Activated T-helper 2 cell treated with anti-CD3 and anti-CD28 coated beads, Interferon-gamma antibody, Interleukin-2, Interleukin-4, amounts not matched to agents 10 μg/mL and 5 μg/mL and 100 μg/mL, durations not matched to agents 14 hours and 24 hours and 36 hours (primary cell): ENCODE measurements at regions of chr17 and their contacts with region 1.

Region 1: GRCh38 chr17:27473748-27474609 is 17.7 kb downstream of the KSR1 start:
- DNase-seq: peak; percentile 74
- H3K4me3 Mint-ChIP-seq: peak overlapping the region; percentile 10
- H3K27ac Mint-ChIP-seq: peak overlapping the region; percentile 89
- H3K4me1 Mint-ChIP-seq: peaks cover 80% of the 10 kb centered on the region
- H3K27me3 Mint-ChIP-seq: no peaks in the 10 kb centered on the region

Region 2: GRCh38 chr17:27293898-27294688 is 179.9 kb before region 1 on chr17 and contains the start of gene WSB1:
- intact Hi-C with region 1: loop called (anchors 5 kb)
- DNase-seq: peak; percentile 89
- H3K4me3 Mint-ChIP-seq: peak within 1 kb of the TSS; percentile 97
- H3K27ac Mint-ChIP-seq: peak within 1 kb of the TSS; percentile 99
- H3K4me1 Mint-ChIP-seq: peaks cover 29% of the 10 kb centered on the region
- H3K27me3 Mint-ChIP-seq: no peaks in the 10 kb centered on the region
- total RNA-seq, gene WSB1: 165 and 170 TPM in 2 replicates

Region 3: GRCh38 chr17:27332485-27333409 is 141.2 kb before region 1 on chr17:
- intact Hi-C with region 1: no loop called
- DNase-seq: peak; percentile 84
- H3K4me3 Mint-ChIP-seq: peak overlapping the region; percentile 85
- H3K27ac Mint-ChIP-seq: peak overlapping the region; percentile 99
- H3K4me1 Mint-ChIP-seq: peaks cover 23% of the 10 kb centered on the region
- H3K27me3 Mint-ChIP-seq: no peaks in the 10 kb centered on the region

Region 4: DNA sequence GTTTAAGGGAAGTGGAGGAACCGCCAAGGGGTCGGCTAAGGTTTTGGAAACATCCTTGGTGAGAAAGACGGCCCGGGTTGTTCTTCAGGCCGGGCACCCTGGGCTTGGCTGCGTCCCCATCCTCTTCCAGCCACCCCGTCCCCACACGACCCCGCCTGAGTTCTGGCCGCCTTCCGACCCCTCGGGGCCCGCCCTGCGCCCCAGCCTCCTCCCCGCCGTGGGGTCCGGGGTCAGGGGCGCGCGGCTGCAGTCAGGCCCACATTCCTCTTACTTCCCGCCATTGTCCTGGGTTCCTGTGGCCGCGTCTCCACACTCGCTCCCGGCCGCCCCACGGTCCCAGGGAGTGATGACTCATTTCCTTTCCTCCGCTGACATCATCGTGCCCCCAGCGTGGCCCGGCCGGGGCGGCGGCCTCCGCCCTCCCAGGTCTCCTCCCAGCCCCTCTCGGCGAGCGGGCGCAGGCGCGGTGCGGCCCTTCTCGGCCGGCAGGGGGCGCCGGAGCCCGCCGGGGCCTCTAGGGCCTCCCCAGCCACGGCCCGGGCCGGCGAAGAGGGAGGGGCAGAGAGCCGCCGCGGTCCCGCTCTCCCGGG is 120.4 kb before region 1 on chr17:
- intact Hi-C with region 1: loop called (anchors 5 kb)
- DNase-seq: peak; percentile 84
- H3K4me3 Mint-ChIP-seq: peak overlapping the region; percentile 78
- H3K27ac Mint-ChIP-seq: peak overlapping the region; percentile 96
- H3K4me1 Mint-ChIP-seq: peaks cover 26% of the 10 kb centered on the region
- H3K27me3 Mint-ChIP-seq: no peaks in the 10 kb centered on the region

Region 5: DNA sequence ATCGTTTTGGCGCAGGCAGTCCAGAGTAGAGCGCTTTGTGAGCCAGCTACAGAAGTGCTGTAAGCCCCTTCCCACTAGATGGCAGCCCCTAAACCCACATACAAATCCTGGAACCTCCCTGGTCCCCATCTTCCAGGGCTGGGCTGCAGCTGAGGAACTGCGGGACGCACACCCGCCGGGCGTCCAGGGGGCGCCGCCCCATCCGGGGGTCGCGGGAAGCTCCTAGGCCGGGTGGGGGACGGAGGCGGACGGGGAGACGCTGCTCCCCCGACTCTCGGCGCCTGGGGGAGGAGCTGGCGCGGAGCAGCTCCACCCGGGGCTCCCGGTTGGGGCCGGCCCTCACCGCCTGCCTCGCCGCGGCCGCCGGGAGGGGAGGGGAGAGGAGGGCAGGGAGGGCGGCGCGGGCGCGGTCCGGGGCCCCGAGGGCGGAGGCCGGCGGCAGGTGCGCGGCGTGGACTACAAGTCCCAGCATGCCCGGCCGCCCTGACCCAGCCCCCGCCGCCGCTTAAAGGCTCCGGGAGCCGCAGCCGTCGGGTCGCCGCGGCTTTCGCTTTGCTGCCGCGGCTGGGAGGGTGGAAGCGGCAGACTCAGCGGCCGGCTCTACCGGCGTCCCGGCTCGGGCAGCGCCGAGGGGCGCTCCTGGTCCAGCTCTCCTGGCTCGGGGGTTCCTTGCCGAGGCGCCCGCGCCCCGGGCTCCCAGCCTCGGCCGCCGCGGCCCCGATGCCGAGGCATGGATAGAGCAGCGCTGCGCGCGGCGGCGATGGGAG is 17.9 kb before region 1 on chr17 and contains the start of gene KSR1:
- intact Hi-C with region 1: loop called (anchors 1 kb)
- DNase-seq: peak; percentile 77
- H3K4me3 Mint-ChIP-seq: peak within 1 kb of the TSS; percentile 95
- H3K27ac Mint-ChIP-seq: peak within 1 kb of the TSS; percentile 57
- H3K4me1 Mint-ChIP-seq: peaks cover 35% of the 10 kb centered on the region
- H3K27me3 Mint-ChIP-seq: peaks cover 11% of the 10 kb centered on the region
- total RNA-seq, gene KSR1: 96.5 and 101 TPM in 2 replicates

Region 6: GRCh38 chr17:27578718-27579085 is 104.7 kb after region 1 on chr17:
- intact Hi-C with region 1: loop called (anchors 2 kb)
- DNase-seq: peak; percentile 41
- H3K4me3 Mint-ChIP-seq: no peak overlapping the region
- H3K27ac Mint-ChIP-seq: peak overlapping the region; percentile 90
- H3K4me1 Mint-ChIP-seq: peaks cover 68% of the 10 kb centered on the region
- H3K27me3 Mint-ChIP-seq: no peaks in the 10 kb centered on the region